ENCODE measurements at regions of chr9 and their contacts with region 1.

Region 1: GRCh38 chr9:137521405-137521985 is 28.7 kb downstream of the PNPLA7 start:
- DNase-seq: no peak
- ATAC-seq: no peak
- H3K4me3 ChIP-seq: no peak overlapping the region
- H3K4me3 Mint-ChIP-seq: no peak overlapping the region
- H3K27ac ChIP-seq: no peak overlapping the region
- H3K27ac Mint-ChIP-seq: no peak overlapping the region
- H3K4me1 ChIP-seq: peaks cover 3% of the 10 kb centered on the region
- H3K4me1 Mint-ChIP-seq: peaks cover 4% of the 10 kb centered on the region
- H3K27me3 ChIP-seq: no peaks in the 10 kb centered on the region
- H3K27me3 Mint-ChIP-seq: no peaks in the 10 kb centered on the region
- CTCF ChIP-seq: no peak

Region 2: GRCh38 chr9:137465000-137465719 is 56.3 kb before region 1 on chr9:
- CTCF ChIA-PET with region 1: no interaction called
- POLR2A ChIA-PET with region 1: no interaction called
- intact Hi-C with region 1: loop called in 1 of 2 experiments (anchors 5 kb)
- DNase-seq: peak in 1 of 14 experiments; percentile 17
- ATAC-seq: no peak
- H3K4me3 ChIP-seq: no peak overlapping the region
- H3K4me3 Mint-ChIP-seq: no peak overlapping the region
- H3K27ac ChIP-seq: no peak overlapping the region
- H3K27ac Mint-ChIP-seq: no peak overlapping the region
- H3K4me1 ChIP-seq: peaks cover 33% of the 10 kb centered on the region
- H3K4me1 Mint-ChIP-seq: peaks cover 25% of the 10 kb centered on the region
- H3K27me3 ChIP-seq: no peaks in the 10 kb centered on the region
- H3K27me3 Mint-ChIP-seq: no peaks in the 10 kb centered on the region
- CTCF ChIP-seq: no peak

Measured in CD4-positive, alpha-beta T cell (primary cell).